ENCODE measurements at regions of chr1 and their contacts with region 1.

Region 1: DNA sequence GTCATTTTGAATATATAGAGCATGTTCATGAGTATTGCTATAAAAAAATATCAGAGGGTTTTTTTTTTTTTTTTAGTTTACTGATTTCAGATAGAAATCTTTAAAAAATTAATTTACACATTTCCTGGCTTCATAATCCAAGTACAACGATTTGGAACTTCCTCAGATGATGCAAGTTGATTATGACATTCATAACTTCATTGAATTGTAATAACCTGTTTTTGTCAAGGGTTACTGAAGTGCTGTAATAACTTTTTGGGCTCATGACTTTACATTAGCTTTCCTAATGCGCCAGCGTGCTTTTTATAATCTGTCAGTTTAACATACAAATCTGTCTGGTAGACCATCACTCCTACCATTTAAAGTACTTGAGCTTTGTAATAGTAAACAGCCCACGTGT is 81.3 kb downstream of the SASS6 start:
- DNase-seq: no peak
- ATAC-seq: no peak
- H3K4me3 ChIP-seq: no peak overlapping the region
- H3K4me3 Mint-ChIP-seq: no peak overlapping the region
- H3K27ac ChIP-seq: no peak overlapping the region
- H3K27ac Mint-ChIP-seq: peak overlapping the region in 1 of 2 donors; percentile 34
- H3K4me1 ChIP-seq: peaks cover 8 to 19% of the 10 kb centered on the region in 2 experiments
- H3K4me1 Mint-ChIP-seq: peaks cover 56 to 65% (median 59%) of the 10 kb centered on the region in 3 donors
- H3K27me3 ChIP-seq: no peaks in the 10 kb centered on the region
- H3K27me3 Mint-ChIP-seq: no peaks in the 10 kb centered on the region

Region 2: GRCh38 chr1:100065183-100065968 is 14.0 kb after region 1 on chr1:
- CTCF ChIA-PET with region 1: interaction called in 1 of 2 experiments, 3 read pairs
- POLR2A ChIA-PET with region 1: interaction called, 4 to 13 read pairs
- DNase-seq: peak in 1 of 35 experiments; percentile 11
- ATAC-seq: no peak
- H3K4me3 ChIP-seq: no peak overlapping the region
- H3K4me3 Mint-ChIP-seq: peak overlapping the region in 1 of 3 donors; percentile 42
- H3K27ac ChIP-seq: peak overlapping the region; percentile 26
- H3K27ac Mint-ChIP-seq: peak overlapping the region; percentile 77 to 82
- H3K4me1 ChIP-seq: peaks cover under 1 to 5% of the 10 kb centered on the region in 2 experiments
- H3K4me1 Mint-ChIP-seq: peaks cover 21 to 34% (median 23%) of the 10 kb centered on the region in 3 donors
- H3K27me3 ChIP-seq: no peaks in the 10 kb centered on the region
- H3K27me3 Mint-ChIP-seq: no peaks in the 10 kb centered on the region

Region 3: DNA sequence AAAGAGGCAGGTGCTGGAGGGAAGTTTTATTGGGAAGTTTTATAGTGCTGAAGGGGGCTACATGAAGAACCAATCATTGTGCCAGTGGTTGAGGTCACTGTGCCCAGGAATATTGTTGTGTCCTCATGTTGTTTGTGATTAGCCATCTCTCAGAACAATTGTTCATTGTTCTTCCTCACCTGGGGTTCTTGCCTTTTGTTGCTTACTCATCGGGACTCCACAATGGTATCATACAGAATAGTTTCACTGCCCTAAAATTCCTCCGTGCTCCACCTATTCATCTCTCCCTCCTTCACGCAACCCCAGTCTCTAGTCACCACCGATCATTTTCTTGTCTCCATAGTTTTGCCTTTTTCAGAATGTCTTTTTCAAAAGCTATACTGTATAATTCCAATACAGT is 262.0 kb after region 1 on chr1:
- CTCF ChIA-PET with region 1: no interaction called
- POLR2A ChIA-PET with region 1: interaction called in 1 of 2 experiments, 11 read pairs
- DNase-seq: no peak
- ATAC-seq: no peak
- H3K4me3 ChIP-seq: no peak overlapping the region
- H3K4me3 Mint-ChIP-seq: no peak overlapping the region
- H3K27ac ChIP-seq: no peak overlapping the region
- H3K27ac Mint-ChIP-seq: no peak overlapping the region
- H3K4me1 ChIP-seq: no peaks in the 10 kb centered on the region
- H3K4me1 Mint-ChIP-seq: no peaks in the 10 kb centered on the region
- H3K27me3 ChIP-seq: peaks cover 0 to 6% of the 10 kb centered on the region in 2 experiments
- H3K27me3 Mint-ChIP-seq: no peaks in the 10 kb centered on the region

Region 4: DNA sequence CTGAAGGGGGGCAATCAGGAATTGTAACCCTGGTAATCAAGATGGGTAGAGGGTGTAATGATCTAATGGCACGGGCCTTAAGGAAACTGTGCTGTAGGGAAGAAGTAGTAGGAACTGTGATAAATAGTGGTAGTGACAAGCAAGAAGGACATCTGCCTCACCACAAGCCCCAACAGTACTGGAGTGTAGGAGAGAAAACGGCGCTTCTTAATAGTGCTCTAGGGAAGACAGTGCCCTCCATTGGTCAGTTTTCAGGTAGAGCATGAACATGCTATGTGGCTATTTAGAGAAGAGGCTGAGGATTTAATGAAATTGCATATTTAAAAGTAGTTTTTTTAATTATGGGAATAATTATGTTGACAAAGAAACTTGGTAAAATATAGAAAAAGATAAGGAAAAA is 876.7 kb after region 1 on chr1:
- CTCF ChIA-PET with region 1: no interaction called
- POLR2A ChIA-PET with region 1: interaction called in 1 of 2 experiments, 11 read pairs
- DNase-seq: peak in 1 of 35 experiments; percentile 57
- ATAC-seq: no peak
- H3K4me3 ChIP-seq: peak overlapping the region; percentile 23 to 50
- H3K4me3 Mint-ChIP-seq: no peak overlapping the region
- H3K27ac ChIP-seq: peak overlapping the region; percentile 78
- H3K27ac Mint-ChIP-seq: no peak overlapping the region
- H3K4me1 ChIP-seq: peaks cover 32 to 82% of the 10 kb centered on the region in 2 experiments
- H3K4me1 Mint-ChIP-seq: peaks cover 17 to 38% (median 37%) of the 10 kb centered on the region in 3 donors
- H3K27me3 ChIP-seq: no peaks in the 10 kb centered on the region
- H3K27me3 Mint-ChIP-seq: no peaks in the 10 kb centered on the region

Measured in T-cell (primary cell).